Activated CD8-positive, alpha-beta T cell treated with anti-CD3 and anti-CD28 coated beads, Interleukin-2, amount 10 ng/mL, durations not matched to agents 7 days and 5 days (primary cell): ENCODE measurements at regions of chr7 and their contacts with region 1.

Region 1: GRCh38 chr7:73522105-73522872 is at the start of gene BAZ1B:
- DNase-seq: peak; percentile 99
- ATAC-seq: peak; percentile 94
- H3K4me3 Mint-ChIP-seq: peak within 1 kb of the TSS; percentile 98
- H3K27ac Mint-ChIP-seq: peak within 1 kb of the TSS; percentile 100
- H3K4me1 Mint-ChIP-seq: peaks cover 62% of the 10 kb centered on the region
- H3K27me3 Mint-ChIP-seq: no peaks in the 10 kb centered on the region
- total RNA-seq, gene BAZ1B: 111 to 112 TPM

Region 2: GRCh38 chr7:72674394-72674793 is 847.9 kb before region 1 on chr7:
- CTCF ChIA-PET with region 1: no interaction called
- POLR2A ChIA-PET with region 1: no interaction called
- DNase-seq: no peak
- ATAC-seq: no peak
- H3K4me3 Mint-ChIP-seq: no peak overlapping the region
- H3K27ac Mint-ChIP-seq: no peak overlapping the region
- H3K4me1 Mint-ChIP-seq: no peaks in the 10 kb centered on the region
- H3K27me3 Mint-ChIP-seq: no peaks in the 10 kb centered on the region

Region 3: DNA sequence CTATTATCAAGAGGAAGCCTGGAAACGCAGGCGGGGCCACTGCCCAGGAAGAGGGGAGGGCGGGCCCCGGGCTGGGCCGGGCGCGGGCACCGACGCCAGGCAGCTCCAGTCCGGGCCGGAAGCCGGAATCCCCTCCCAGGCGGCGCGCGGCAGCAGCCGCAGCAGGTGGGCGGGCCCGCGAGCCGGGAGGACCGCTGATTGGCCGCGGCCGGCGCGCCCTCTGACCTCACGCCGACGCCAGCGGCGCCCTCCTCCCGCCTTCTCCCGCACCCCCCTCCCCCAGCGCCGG is 34.8 kb after region 1 on chr7:
- CTCF ChIA-PET with region 1: interaction called, 3 read pairs
- POLR2A ChIA-PET with region 1: interaction called, 50 read pairs
- DNase-seq: peak; percentile 93
- ATAC-seq: peak; percentile 95
- H3K4me3 Mint-ChIP-seq: peak overlapping the region; percentile 90
- H3K27ac Mint-ChIP-seq: peak overlapping the region; percentile 95
- H3K4me1 Mint-ChIP-seq: peaks cover 32% of the 10 kb centered on the region
- H3K27me3 Mint-ChIP-seq: peaks cover 6% of the 10 kb centered on the region

Region 4: GRCh38 chr7:73578342-73579127 is 56.2 kb after region 1 on chr7 and contains the start of gene TBL2:
- CTCF ChIA-PET with region 1: interaction called, 4 read pairs
- POLR2A ChIA-PET with region 1: interaction called, 19 read pairs
- DNase-seq: peak; percentile 99
- ATAC-seq: peak; percentile 94
- H3K4me3 Mint-ChIP-seq: peak within 1 kb of the TSS; percentile 86
- H3K27ac Mint-ChIP-seq: peak within 1 kb of the TSS; percentile 94
- H3K4me1 Mint-ChIP-seq: peaks cover 28% of the 10 kb centered on the region
- H3K27me3 Mint-ChIP-seq: no peaks in the 10 kb centered on the region
- total RNA-seq, gene TBL2: 26.1 to 26.4 TPM